ENCODE measurements at regions of chr3 and their contacts with region 1.

Region 1: GRCh38 chr3:187227658-187228258 is 30.5 kb downstream of the RTP1 start:
- DNase-seq: no peak
- ATAC-seq: no peak
- H3K4me3 ChIP-seq: no peak overlapping the region
- H3K27ac ChIP-seq: no peak overlapping the region
- H3K4me1 ChIP-seq: no peaks in the 10 kb centered on the region; a peak in 1 of 5 replicates
- H3K27me3 ChIP-seq: peaks cover 6 to 52% of the 10 kb centered on the region in 2 experiments; a peak in 3 of 5 replicates
- CTCF ChIP-seq: no peak
- EP300 ChIP-seq: no peak
- POLR2A ChIP-seq: no peak
- RAD21 ChIP-seq: no peak

Region 2: GRCh38 chr3:187243933-187244524 is 16.3 kb after region 1 on chr3:
- CTCF ChIA-PET with region 1: no interaction called
- POLR2A ChIA-PET with region 1: no interaction called
- in situ Hi-C with region 1: no loop called
- intact Hi-C with region 1: no loop called
- DNase-seq: no peak
- ATAC-seq: no peak
- H3K4me3 ChIP-seq: no peak overlapping the region
- H3K27ac ChIP-seq: no peak overlapping the region
- H3K4me1 ChIP-seq: no peaks in the 10 kb centered on the region
- H3K27me3 ChIP-seq: peaks cover 8 to 28% of the 10 kb centered on the region in 2 experiments; a peak in 4 of 5 replicates
- CTCF ChIP-seq: no peak
- EP300 ChIP-seq: no peak
- POLR2A ChIP-seq: no peak
- RAD21 ChIP-seq: no peak

Region 3: DNA sequence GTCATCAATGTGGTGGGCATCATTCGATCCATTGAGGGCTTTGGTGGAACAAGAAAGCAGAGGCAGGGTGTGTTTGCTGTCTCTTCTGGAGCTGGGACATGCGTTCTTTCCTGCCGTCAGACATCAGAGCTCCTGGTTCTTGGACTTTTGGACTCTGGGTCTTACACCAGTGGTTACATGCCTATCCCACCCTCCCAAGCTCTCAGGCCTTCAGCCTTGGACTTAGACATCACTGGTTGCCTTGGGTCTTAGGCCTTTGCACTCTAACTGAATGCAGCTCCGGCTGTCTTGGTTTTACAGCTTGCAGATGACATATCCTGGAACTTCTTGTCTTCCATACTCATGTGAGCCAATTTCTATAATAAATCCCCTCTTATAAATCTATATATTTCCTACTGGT is 71.9 kb after region 1 on chr3:
- CTCF ChIA-PET with region 1: no interaction called
- POLR2A ChIA-PET with region 1: interaction called, 3 read pairs
- in situ Hi-C with region 1: loop called (anchors 5 kb)
- intact Hi-C with region 1: no loop called
- DNase-seq: no peak
- ATAC-seq: no peak
- H3K4me3 ChIP-seq: no peak overlapping the region
- H3K27ac ChIP-seq: no peak overlapping the region
- H3K4me1 ChIP-seq: no peaks in the 10 kb centered on the region
- H3K27me3 ChIP-seq: peaks cover 0 to 10% of the 10 kb centered on the region in 2 experiments; a peak in 2 of 5 replicates
- CTCF ChIP-seq: no peak
- EP300 ChIP-seq: no peak
- POLR2A ChIP-seq: no peak
- RAD21 ChIP-seq: no peak

Region 4: GRCh38 chr3:187616307-187616972 is 388.7 kb after region 1 on chr3:
- CTCF ChIA-PET with region 1: no interaction called
- POLR2A ChIA-PET with region 1: no interaction called
- in situ Hi-C with region 1: no loop called
- intact Hi-C with region 1: loop called (anchors 5 kb)
- DNase-seq: peak; percentile 41 to 63 (median 50)
- ATAC-seq: peak; percentile 91
- H3K4me3 ChIP-seq: no peak overlapping the region
- H3K27ac ChIP-seq: no peak overlapping the region
- H3K4me1 ChIP-seq: no peaks in the 10 kb centered on the region
- H3K27me3 ChIP-seq: no peaks in the 10 kb centered on the region
- CTCF ChIP-seq: peak; percentile 58 to 75 (median 69); a peak in 5 of 6 replicates
- EP300 ChIP-seq: no peak
- POLR2A ChIP-seq: no peak
- RAD21 ChIP-seq: peak; percentile 50 to 64